Activated B cell treated with CpG ODN at 0.5 μM for 24 hours (primary cell): ENCODE measurements at regions of chrX and their contacts with region 1.

Region 1: GRCh38 chrX:7147978-7148824 is at the start of gene PUDP:
- DNase-seq: peak; percentile 80
- ATAC-seq: peak; percentile 85
- H3K4me3 Mint-ChIP-seq: peak within 1 kb of the TSS; percentile 89
- H3K27ac Mint-ChIP-seq: peak within 1 kb of the TSS; percentile 88
- H3K4me1 Mint-ChIP-seq: peaks cover 9% of the 10 kb centered on the region
- H3K27me3 Mint-ChIP-seq: no peaks in the 10 kb centered on the region
- CTCF ChIP-seq: no peak
- total RNA-seq, gene PUDP: 14.0 and 15.0 TPM in 2 replicates

Region 2: DNA sequence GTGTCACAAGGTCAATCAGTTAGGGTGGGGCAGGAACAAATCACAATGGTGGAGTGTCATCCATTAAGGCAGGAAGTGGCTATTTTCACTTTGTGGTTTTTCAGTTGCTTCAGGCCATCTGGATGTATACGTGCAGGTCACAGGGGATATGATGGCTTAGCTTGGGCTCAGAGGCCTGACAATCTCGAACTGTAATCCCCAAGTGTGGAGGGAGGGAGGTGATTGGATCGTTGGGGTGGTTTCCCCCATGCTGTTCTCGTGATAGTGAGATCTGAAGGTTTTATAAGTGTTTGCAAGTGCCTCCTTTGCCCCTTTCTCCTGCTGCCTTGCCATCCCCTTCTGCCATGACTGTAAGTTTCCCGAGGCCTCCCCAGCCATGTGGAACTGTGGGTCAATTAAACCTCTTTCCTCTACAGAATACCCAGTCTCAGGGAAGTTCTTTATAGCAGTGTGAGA is 37.4 kb before region 1 on chrX:
- CTCF ChIA-PET with region 1: no interaction called
- POLR2A ChIA-PET with region 1: interaction called, 12 read pairs
- intact Hi-C with region 1: loop called (anchors 2 kb)
- DNase-seq: no peak
- ATAC-seq: peak; percentile 78
- H3K4me3 Mint-ChIP-seq: peak overlapping the region; percentile 74
- H3K27ac Mint-ChIP-seq: peak overlapping the region; percentile 93
- H3K4me1 Mint-ChIP-seq: peaks cover 44% of the 10 kb centered on the region
- H3K27me3 Mint-ChIP-seq: no peaks in the 10 kb centered on the region
- CTCF ChIP-seq: no peak

Region 3: DNA sequence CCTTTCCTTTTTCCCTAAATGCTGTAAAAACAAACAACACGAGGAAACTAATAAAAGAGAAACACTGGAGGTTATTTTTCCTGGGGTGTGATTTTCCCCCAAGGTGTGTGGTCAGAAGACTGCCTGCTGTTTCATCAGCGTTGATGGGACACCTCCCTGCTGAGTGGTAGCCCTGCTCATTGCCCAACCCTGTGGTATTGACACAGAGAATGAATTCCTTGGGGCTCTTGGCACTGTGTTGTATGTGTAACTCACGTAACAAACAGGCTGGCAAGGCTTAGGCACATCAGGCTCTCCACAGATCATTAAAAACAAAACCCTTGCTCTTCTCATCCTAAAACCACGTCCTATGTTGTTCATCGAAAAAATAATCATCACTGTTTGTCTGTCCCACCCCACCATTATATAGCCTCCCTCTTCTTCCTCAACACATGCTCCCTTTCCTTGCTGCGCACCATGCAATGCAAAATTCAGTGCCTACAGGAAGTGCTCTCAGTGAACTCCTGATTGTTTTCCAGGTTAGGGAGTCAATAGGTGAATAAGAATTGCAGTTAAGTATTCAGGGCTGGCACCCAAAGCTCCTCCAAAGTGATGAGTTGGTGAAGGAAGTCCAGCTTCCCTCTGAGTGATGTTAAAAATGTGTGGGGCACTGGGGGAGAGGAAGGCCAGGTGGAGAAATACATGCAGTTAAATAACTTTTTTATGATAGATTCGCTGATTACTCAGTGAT is 11.1 kb after region 1 on chrX:
- CTCF ChIA-PET with region 1: no interaction called
- POLR2A ChIA-PET with region 1: no interaction called
- intact Hi-C with region 1: no loop called
- DNase-seq: no peak
- ATAC-seq: no peak
- H3K4me3 Mint-ChIP-seq: no peak overlapping the region
- H3K27ac Mint-ChIP-seq: no peak overlapping the region
- H3K4me1 Mint-ChIP-seq: no peaks in the 10 kb centered on the region
- H3K27me3 Mint-ChIP-seq: no peaks in the 10 kb centered on the region
- CTCF ChIP-seq: no peak

Region 4: GRCh38 chrX:7261672-7262332 is 113.6 kb after region 1 on chrX:
- CTCF ChIA-PET with region 1: no interaction called
- POLR2A ChIA-PET with region 1: no interaction called
- intact Hi-C with region 1: loop called (anchors 1 kb)
- DNase-seq: no peak
- ATAC-seq: peak; percentile 62
- H3K4me3 Mint-ChIP-seq: peak overlapping the region; percentile 64
- H3K27ac Mint-ChIP-seq: peak overlapping the region; percentile 89
- H3K4me1 Mint-ChIP-seq: peaks cover 39% of the 10 kb centered on the region
- H3K27me3 Mint-ChIP-seq: no peaks in the 10 kb centered on the region
- CTCF ChIP-seq: no peak

Region 5: GRCh38 chrX:7925867-7926472 is 777.8 kb after region 1 on chrX:
- CTCF ChIA-PET with region 1: no interaction called
- POLR2A ChIA-PET with region 1: interaction called, 4 read pairs
- intact Hi-C with region 1: loop called (anchors 1 kb)
- DNase-seq: no peak
- ATAC-seq: no peak
- H3K4me3 Mint-ChIP-seq: peak overlapping the region; percentile 48
- H3K27ac Mint-ChIP-seq: peak overlapping the region; percentile 61
- H3K4me1 Mint-ChIP-seq: peaks cover 17% of the 10 kb centered on the region
- H3K27me3 Mint-ChIP-seq: no peaks in the 10 kb centered on the region
- CTCF ChIP-seq: no peak